ENCODE measurements at regions of chr12 and their contacts with region 1.

Region 1: GRCh38 chr12:75542942-75543341 is 31.5 kb upstream of the KRR1 start:
- DNase-seq: no peak
- H3K4me3 ChIP-seq: no peak overlapping the region
- H3K27ac ChIP-seq: no peak overlapping the region
- H3K4me1 ChIP-seq: no peaks in the 10 kb centered on the region
- H3K27me3 ChIP-seq: no peaks in the 10 kb centered on the region
- CTCF ChIP-seq: no peak
- EP300 ChIP-seq: no peak
- POLR2A ChIP-seq: no peak

Region 2: DNA sequence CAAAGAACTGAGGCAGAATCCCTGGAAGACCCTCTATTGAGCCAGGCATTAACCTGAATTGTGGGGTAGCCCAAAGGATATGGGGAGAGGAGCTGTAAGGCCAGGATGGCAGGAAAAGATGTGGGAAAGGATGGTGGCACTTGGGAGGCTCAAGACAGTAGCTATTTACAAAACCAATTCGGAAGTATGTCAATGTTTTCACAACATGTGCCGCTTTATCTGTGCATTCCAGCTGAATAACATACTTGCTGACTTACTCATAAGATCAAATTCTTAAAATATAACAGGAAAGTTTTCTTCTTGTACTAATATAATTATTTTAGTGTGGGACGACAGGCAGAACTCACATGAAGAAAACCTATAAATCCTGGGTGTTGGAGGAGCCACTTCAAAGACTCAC is 794.6 kb after region 1 on chr12:
- intact Hi-C with region 1: loop called in 1 of 4 experiments (anchors 5 kb)
- DNase-seq: no peak
- H3K4me3 ChIP-seq: no peak overlapping the region
- H3K27ac ChIP-seq: no peak overlapping the region
- H3K4me1 ChIP-seq: no peaks in the 10 kb centered on the region
- H3K27me3 ChIP-seq: no peaks in the 10 kb centered on the region
- CTCF ChIP-seq: no peak
- EP300 ChIP-seq: no peak
- POLR2A ChIP-seq: no peak